Endothelial cell of umbilical vein (primary cell): ENCODE measurements at regions of chr22 and their contacts with region 1.

Region 1: GRCh38 chr22:22591348-22592299 is 32.6 kb upstream of the PRAME start:
- DNase-seq: no peak
- H3K4me3 ChIP-seq: no peak overlapping the region
- H3K27ac ChIP-seq: no peak overlapping the region
- H3K4me1 ChIP-seq: no peaks in the 10 kb centered on the region
- H3K27me3 ChIP-seq: no peaks in the 10 kb centered on the region
- CTCF ChIP-seq: peak in 1 of 2 donors; percentile 6
- POLR2A ChIP-seq: no peak

Region 2: GRCh38 chr22:22316589-22316988 is 275.0 kb before region 1 on chr22:
- CTCF ChIA-PET with region 1: no interaction called
- POLR2A ChIA-PET with region 1: no interaction called
- dilution Hi-C with region 1: no loop called
- intact Hi-C with region 1: no loop called
- DNase-seq: no peak
- H3K4me3 ChIP-seq: no peak overlapping the region
- H3K27ac ChIP-seq: no peak overlapping the region
- H3K4me1 ChIP-seq: no peaks in the 10 kb centered on the region
- H3K27me3 ChIP-seq: no peaks in the 10 kb centered on the region
- CTCF ChIP-seq: no peak
- POLR2A ChIP-seq: no peak

Region 3: DNA sequence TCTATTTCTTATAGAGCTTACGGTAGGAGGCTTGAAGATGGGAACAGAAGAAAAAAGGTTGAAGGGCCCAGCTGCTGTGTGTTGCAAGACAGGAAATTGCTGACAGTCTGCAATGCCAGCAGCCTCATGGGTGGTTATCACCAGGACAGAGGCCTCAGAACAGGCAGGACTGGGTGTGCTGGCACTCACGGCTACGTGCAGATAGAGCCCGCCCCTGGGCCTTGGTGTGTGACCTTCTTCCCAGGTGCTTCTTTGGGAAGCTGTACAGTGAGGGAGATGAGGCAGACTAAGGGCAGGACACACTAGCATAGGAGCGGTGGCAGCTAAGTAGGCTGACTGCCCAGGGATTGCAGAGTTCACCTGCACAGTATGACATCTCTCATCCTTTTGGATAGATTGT is 45.1 kb before region 1 on chr22:
- CTCF ChIA-PET with region 1: interaction called, 13 read pairs
- POLR2A ChIA-PET with region 1: no interaction called
- dilution Hi-C with region 1: no loop called
- intact Hi-C with region 1: no loop called
- DNase-seq: no peak
- H3K4me3 ChIP-seq: no peak overlapping the region
- H3K27ac ChIP-seq: no peak overlapping the region
- H3K4me1 ChIP-seq: no peaks in the 10 kb centered on the region
- H3K27me3 ChIP-seq: peaks cover 2 to 7% of the 10 kb centered on the region in 2 experiments
- CTCF ChIP-seq: no peak
- POLR2A ChIP-seq: no peak

Region 4: GRCh38 chr22:22576244-22576988 is 15.2 kb before region 1 on chr22:
- CTCF ChIA-PET with region 1: interaction called, 126 read pairs
- POLR2A ChIA-PET with region 1: no interaction called
- dilution Hi-C with region 1: no loop called
- intact Hi-C with region 1: no loop called
- DNase-seq: peak; percentile 31
- H3K4me3 ChIP-seq: no peak overlapping the region
- H3K27ac ChIP-seq: no peak overlapping the region
- H3K4me1 ChIP-seq: no peaks in the 10 kb centered on the region
- H3K27me3 ChIP-seq: peaks cover 10 to 12% of the 10 kb centered on the region in 2 experiments
- CTCF ChIP-seq: peak; percentile 82 to 94
- POLR2A ChIP-seq: no peak

Region 5: GRCh38 chr22:22710719-22711531 is 119.3 kb after region 1 on chr22:
- CTCF ChIA-PET with region 1: interaction called, 20 read pairs
- POLR2A ChIA-PET with region 1: no interaction called
- dilution Hi-C with region 1: no loop called
- intact Hi-C with region 1: no loop called
- DNase-seq: peak; percentile 41
- H3K4me3 ChIP-seq: no peak overlapping the region
- H3K27ac ChIP-seq: no peak overlapping the region
- H3K4me1 ChIP-seq: no peaks in the 10 kb centered on the region
- H3K27me3 ChIP-seq: peaks cover 0 to 2% of the 10 kb centered on the region in 2 experiments
- CTCF ChIP-seq: peak; percentile 90 to 97
- POLR2A ChIP-seq: no peak